AG04450 (cell line): ENCODE measurements at regions of chr15 and their contacts with region 1.

Region 1: DNA sequence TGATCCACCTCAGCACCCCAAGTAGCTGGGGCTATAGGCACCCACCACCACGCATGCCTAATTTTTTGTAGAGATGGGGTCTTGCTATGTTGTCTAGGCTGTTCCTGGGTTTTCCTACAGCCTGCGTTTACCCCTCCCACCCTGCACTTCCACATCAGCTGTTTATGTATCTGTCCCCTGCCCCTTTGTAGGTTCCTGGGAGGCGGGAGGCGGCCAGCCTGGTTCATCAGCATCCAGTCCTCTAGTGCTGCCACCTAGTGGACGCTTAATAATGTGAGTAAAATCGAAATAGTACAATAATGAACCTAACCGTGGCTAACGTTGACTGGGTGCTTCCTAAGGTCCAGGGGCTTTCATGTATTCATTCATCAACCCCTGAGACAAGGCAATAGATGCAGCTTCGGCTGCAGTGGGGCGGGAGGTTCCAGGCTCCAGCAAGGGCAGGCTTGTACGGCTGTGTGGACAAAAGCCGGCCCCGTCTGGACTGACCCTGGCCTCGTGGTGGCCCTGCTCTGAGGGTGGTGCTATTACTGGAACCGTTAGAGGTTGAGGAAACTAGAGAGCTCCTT is 1.2 kb upstream of the LCTL start:
- DNase-seq: peak; percentile 42
- H3K4me3 ChIP-seq: no peak overlapping the region
- H3K27ac ChIP-seq: no peak overlapping the region
- H3K27me3 ChIP-seq: no peaks in the 10 kb centered on the region
- CTCF ChIP-seq: peak; percentile 73

Region 2: GRCh38 chr15:66497502-66498455 is 69.3 kb before region 1 on chr15 and contains the start of gene SNAPC5:
- CTCF ChIA-PET with region 1: interaction called, 14 read pairs
- POLR2A ChIA-PET with region 1: interaction called, 3 read pairs
- DNase-seq: peak; percentile 82
- H3K4me3 ChIP-seq: peak within 1 kb of the TSS; percentile 97
- H3K27ac ChIP-seq: peak within 1 kb of the TSS; percentile 63
- H3K27me3 ChIP-seq: no peaks in the 10 kb centered on the region
- CTCF ChIP-seq: peak; percentile 97
- polyA plus RNA-seq, gene SNAPC5: 26.5 and 31.3 TPM in 2 replicates

Region 3: GRCh38 chr15:66542896-66543295 is 24.2 kb before region 1 on chr15:
- CTCF ChIA-PET with region 1: interaction called, 12 read pairs
- POLR2A ChIA-PET with region 1: no interaction called
- DNase-seq: no peak
- H3K4me3 ChIP-seq: no peak overlapping the region
- H3K27ac ChIP-seq: no peak overlapping the region
- H3K27me3 ChIP-seq: no peaks in the 10 kb centered on the region
- CTCF ChIP-seq: no peak

Region 4: DNA sequence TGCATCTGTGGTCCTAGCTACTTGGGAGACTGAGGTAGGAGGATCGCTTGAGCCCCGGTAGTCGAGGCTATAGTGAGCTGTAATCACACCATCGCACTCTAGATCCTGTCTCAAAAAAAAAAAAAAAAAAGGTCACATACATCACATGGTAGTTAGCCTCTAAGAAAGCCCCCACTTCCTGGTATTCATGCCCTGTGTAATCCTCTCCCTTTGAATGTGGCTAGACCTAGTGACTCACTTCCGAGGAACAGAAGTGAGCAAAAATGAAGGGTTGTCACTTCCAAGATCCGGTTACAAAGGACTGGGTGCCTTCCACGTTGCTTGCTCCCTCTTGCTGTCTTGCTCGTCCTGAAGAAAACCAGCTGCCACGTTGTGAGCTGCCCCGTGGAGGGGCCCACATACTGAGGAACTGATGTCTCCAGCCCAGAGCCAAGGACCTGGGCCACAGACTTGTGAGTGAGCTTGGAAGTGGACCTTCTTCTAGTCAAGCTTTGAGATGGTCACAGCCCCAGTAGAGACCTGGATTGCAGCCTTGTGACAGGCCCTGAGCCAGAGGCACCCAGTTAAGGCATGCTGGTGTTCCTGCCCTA is 11.3 kb after region 1 on chr15:
- CTCF ChIA-PET with region 1: interaction called, 24 read pairs
- POLR2A ChIA-PET with region 1: interaction called, 3 read pairs
- DNase-seq: peak; percentile 20
- H3K4me3 ChIP-seq: no peak overlapping the region
- H3K27ac ChIP-seq: no peak overlapping the region
- H3K27me3 ChIP-seq: no peaks in the 10 kb centered on the region
- CTCF ChIP-seq: no peak